MCF 10A (cell line): ENCODE measurements at regions of chr3 and their contacts with region 1.

Region 1: GRCh38 chr3:99808151-99808794 is 9.4 kb upstream of the CMSS1 start:
- DNase-seq: peak; percentile 74
- H3K4me3 Mint-ChIP-seq: no peak overlapping the region
- H3K27ac Mint-ChIP-seq: no peak overlapping the region
- H3K4me1 Mint-ChIP-seq: no peaks in the 10 kb centered on the region
- H3K27me3 Mint-ChIP-seq: no peaks in the 10 kb centered on the region
- CTCF ChIP-seq: peak; percentile 69

Region 2: DNA sequence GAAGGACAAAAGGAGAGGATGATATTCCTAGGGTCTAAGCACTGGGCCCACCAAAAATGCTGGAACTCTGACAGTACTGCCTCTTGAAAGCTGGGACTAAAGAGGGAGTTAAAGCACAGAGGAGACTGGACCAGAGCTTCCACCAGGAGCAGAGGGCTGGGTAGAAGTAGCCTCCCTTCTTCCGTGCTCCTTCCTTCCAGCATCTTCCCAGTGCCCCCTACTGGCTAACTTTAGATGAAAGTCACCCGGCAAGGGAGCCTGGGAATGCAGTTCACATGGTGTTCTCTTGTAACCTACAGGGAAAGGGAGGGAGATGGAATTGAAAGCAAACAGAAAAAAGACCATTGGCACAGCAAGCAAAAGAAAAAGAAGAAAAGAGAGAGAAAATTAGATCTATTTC is 276.0 kb before region 1 on chr3:
- CTCF ChIA-PET with region 1: no interaction called
- POLR2A ChIA-PET with region 1: no interaction called
- intact Hi-C with region 1: no loop called
- DNase-seq: peak; percentile 80
- H3K4me3 Mint-ChIP-seq: no peak overlapping the region
- H3K27ac Mint-ChIP-seq: peak overlapping the region; percentile 10
- H3K4me1 Mint-ChIP-seq: peaks cover 26% of the 10 kb centered on the region
- H3K27me3 Mint-ChIP-seq: no peaks in the 10 kb centered on the region
- CTCF ChIP-seq: peak; percentile 29

Region 3: GRCh38 chr3:99724276-99724675 is 84.0 kb before region 1 on chr3:
- CTCF ChIA-PET with region 1: no interaction called
- POLR2A ChIA-PET with region 1: no interaction called
- intact Hi-C with region 1: no loop called
- DNase-seq: no peak
- H3K4me3 Mint-ChIP-seq: no peak overlapping the region
- H3K27ac Mint-ChIP-seq: no peak overlapping the region
- H3K4me1 Mint-ChIP-seq: peaks cover 32% of the 10 kb centered on the region
- H3K27me3 Mint-ChIP-seq: no peaks in the 10 kb centered on the region
- CTCF ChIP-seq: no peak

Region 4: GRCh38 chr3:99783009-99783573 is 25.2 kb before region 1 on chr3:
- CTCF ChIA-PET with region 1: interaction called, 30 read pairs
- POLR2A ChIA-PET with region 1: no interaction called
- intact Hi-C with region 1: no loop called
- DNase-seq: peak; percentile 41
- H3K4me3 Mint-ChIP-seq: no peak overlapping the region
- H3K27ac Mint-ChIP-seq: no peak overlapping the region
- H3K4me1 Mint-ChIP-seq: peaks cover 5% of the 10 kb centered on the region
- H3K27me3 Mint-ChIP-seq: no peaks in the 10 kb centered on the region
- CTCF ChIP-seq: no peak

Region 5: DNA sequence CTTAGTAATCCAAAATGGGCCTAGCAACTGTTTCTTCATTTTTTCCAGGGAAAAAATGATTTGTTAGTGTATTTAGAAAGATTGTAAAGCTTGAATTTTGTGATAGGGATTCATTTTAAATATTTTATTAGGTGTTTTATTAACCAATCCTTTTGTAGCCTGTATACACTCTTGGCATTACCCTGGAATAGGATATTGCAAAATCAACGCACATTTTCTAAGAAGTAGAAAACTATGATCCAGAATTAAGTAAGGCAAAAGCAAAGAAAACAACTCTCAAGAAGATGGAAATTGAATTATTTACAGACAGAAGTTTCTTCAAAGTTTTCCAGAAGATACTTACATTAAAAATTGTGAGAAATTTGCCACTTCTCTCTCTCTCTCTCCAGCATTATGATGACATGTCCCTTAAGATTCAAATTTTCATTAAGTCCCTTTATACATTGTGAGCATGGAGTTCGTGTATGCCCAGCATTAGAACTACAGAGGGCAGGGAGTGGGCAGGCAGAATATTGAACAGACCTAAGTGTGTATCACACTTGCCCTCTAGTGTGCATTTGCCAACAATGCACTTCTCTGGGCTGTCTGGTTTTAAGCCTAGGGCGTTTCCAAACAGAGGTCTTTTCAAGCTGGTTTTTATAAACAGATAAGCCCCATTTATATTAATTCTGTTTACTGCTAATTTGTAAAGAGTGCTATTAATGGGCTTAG is 19.1 kb before region 1 on chr3:
- CTCF ChIA-PET with region 1: interaction called, 30 read pairs
- POLR2A ChIA-PET with region 1: interaction called, 3 read pairs
- intact Hi-C with region 1: no loop called
- DNase-seq: peak; percentile 66
- H3K4me3 Mint-ChIP-seq: no peak overlapping the region
- H3K27ac Mint-ChIP-seq: no peak overlapping the region
- H3K4me1 Mint-ChIP-seq: peaks cover 6% of the 10 kb centered on the region
- H3K27me3 Mint-ChIP-seq: no peaks in the 10 kb centered on the region
- CTCF ChIP-seq: peak; percentile 63

Region 6: GRCh38 chr3:99825004-99825640 is 16.8 kb after region 1 on chr3:
- CTCF ChIA-PET with region 1: interaction called, 15 read pairs
- POLR2A ChIA-PET with region 1: no interaction called
- intact Hi-C with region 1: no loop called
- DNase-seq: no peak
- H3K4me3 Mint-ChIP-seq: peak overlapping the region; percentile 4
- H3K27ac Mint-ChIP-seq: no peak overlapping the region
- H3K4me1 Mint-ChIP-seq: peaks cover 18% of the 10 kb centered on the region
- H3K27me3 Mint-ChIP-seq: no peaks in the 10 kb centered on the region
- CTCF ChIP-seq: no peak